ENCODE measurements at regions of chr4 and their contacts with region 1.

Region 1: GRCh38 chr4:150242820-150243458 is 164.7 kb downstream of the DCLK2 start:
- DNase-seq: no peak
- H3K4me3 Mint-ChIP-seq: no peak overlapping the region
- H3K27ac Mint-ChIP-seq: no peak overlapping the region
- H3K4me1 Mint-ChIP-seq: no peaks in the 10 kb centered on the region
- H3K27me3 Mint-ChIP-seq: peaks cover 9% of the 10 kb centered on the region

Region 2: DNA sequence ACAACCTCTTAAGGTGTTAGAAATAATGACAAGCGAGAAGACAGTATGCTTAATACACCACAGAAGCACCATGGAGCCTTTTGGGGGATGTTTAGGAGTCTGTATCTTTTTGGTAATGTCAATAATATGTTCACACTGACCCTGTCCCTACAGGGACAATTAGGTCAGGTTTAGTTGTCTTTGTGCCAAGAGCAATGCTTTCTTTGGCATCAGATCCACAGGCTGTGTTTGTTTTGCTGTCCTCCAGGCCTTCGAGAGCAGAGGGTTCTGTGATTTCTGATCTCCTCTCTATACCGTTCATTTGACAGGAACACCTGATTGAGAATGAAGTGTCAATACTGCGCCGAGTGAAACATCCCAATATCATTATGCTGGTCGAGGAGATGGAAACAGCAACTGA is 10.9 kb before region 1 on chr4:
- CTCF ChIA-PET with region 1: interaction called, 12 read pairs
- DNase-seq: no peak
- H3K4me3 Mint-ChIP-seq: no peak overlapping the region
- H3K27ac Mint-ChIP-seq: no peak overlapping the region
- H3K4me1 Mint-ChIP-seq: no peaks in the 10 kb centered on the region
- H3K27me3 Mint-ChIP-seq: peaks cover 23% of the 10 kb centered on the region

Region 3: GRCh38 chr4:150828159-150828558 is 585.2 kb after region 1 on chr4:
- CTCF ChIA-PET with region 1: no interaction called
- DNase-seq: peak; percentile 34
- H3K4me3 Mint-ChIP-seq: no peak overlapping the region
- H3K27ac Mint-ChIP-seq: peak overlapping the region; percentile 75
- H3K4me1 Mint-ChIP-seq: peaks cover 12% of the 10 kb centered on the region
- H3K27me3 Mint-ChIP-seq: no peaks in the 10 kb centered on the region